Right lobe of liver (tissue), 6 donors: ENCODE measurements at regions of chr12 and their contacts with region 1.

Region 1: DNA sequence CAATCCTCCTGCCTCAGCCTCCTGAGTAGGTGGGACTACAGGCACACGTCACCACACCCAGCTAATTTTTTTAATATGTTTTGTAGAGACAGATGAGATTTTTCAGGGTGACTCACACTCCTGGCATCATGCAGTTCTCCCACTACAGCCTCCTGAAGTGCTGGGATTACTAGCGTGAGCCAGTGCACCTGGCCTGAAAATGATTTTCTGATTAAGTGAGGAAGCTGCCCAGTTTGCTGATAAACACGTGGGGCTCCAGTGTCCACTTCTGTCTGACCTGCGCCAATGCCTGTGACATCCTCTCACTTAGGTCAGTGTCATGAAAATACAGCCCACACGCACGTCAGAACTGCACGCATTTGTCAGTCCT is 37.0 kb upstream of the SFSWAP start:
- DNase-seq: no peak
- ATAC-seq: no peak
- H3K4me3 ChIP-seq: no peak overlapping the region
- H3K27ac ChIP-seq: no peak overlapping the region
- H3K4me1 ChIP-seq: no peaks in the 10 kb centered on the region
- H3K27me3 ChIP-seq: no peaks in the 10 kb centered on the region
- CTCF ChIP-seq: no peak
- POLR2A ChIP-seq: no peak

Region 2: GRCh38 chr12:131290255-131290959 is 383.5 kb before region 1 on chr12:
- intact Hi-C with region 1: loop called (anchors 10 kb)
- DNase-seq: no peak
- ATAC-seq: no peak
- H3K4me3 ChIP-seq: no peak overlapping the region
- H3K27ac ChIP-seq: no peak overlapping the region
- H3K4me1 ChIP-seq: no peaks in the 10 kb centered on the region
- H3K27me3 ChIP-seq: no peaks in the 10 kb centered on the region
- CTCF ChIP-seq: no peak
- POLR2A ChIP-seq: no peak

Region 3: GRCh38 chr12:131747276-131748177 is 73.7 kb after region 1 on chr12:
- intact Hi-C with region 1: no loop called
- DNase-seq: no peak
- ATAC-seq: peak in 1 of 4 donors; percentile 28
- H3K4me3 ChIP-seq: no peak overlapping the region
- H3K27ac ChIP-seq: no peak overlapping the region
- H3K4me1 ChIP-seq: no peaks in the 10 kb centered on the region
- H3K27me3 ChIP-seq: no peaks in the 10 kb centered on the region
- CTCF ChIP-seq: no peak
- POLR2A ChIP-seq: no peak

Region 4: DNA sequence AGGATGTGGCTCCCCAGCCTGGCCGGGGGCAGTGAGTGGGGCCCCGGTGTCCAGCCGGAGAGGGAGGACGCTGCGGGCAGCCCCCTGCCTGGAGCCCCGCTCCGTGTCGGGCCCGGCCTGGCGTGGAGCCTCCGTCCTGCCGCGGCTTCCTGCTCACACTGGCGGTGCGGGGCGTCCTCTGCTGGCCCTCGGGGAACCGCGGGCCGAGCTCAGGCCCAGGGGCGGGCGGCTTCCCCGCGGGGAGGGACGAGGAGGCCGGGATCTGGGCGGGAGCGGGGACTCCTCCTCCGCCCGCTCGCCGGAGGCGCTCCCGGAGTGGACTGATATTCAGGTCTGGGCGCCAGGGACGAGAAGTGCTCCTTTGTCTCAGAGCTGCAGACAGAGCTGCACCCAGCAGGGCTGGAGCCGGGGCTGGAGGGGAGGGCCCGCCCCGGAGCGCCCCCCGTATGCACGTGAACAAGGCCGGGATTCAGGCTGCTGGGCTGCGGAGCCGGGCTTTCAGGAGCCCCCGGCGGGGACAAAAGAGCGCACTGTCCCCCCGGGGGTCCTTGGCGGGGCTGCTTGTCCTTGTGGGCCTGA is 156.6 kb after region 1 on chr12:
- intact Hi-C with region 1: no loop called
- DNase-seq: peak in 2 of 3 donors; percentile 72 to 82
- ATAC-seq: peak; percentile 80 to 89 (median 86)
- H3K4me3 ChIP-seq: peak overlapping the region; percentile 27 to 37 (median 31)
- H3K27ac ChIP-seq: no peak overlapping the region
- H3K4me1 ChIP-seq: peaks cover 0 to 23% (median 0%) of the 10 kb centered on the region in 4 donors
- H3K27me3 ChIP-seq: peaks cover 0 to 16% of the 10 kb centered on the region in 2 donors
- CTCF ChIP-seq: peak; percentile 38 to 57 (median 46)
- POLR2A ChIP-seq: peak; percentile 67

Region 5: GRCh38 chr12:132460571-132460970 is 786.7 kb after region 1 on chr12:
- intact Hi-C with region 1: no loop called
- DNase-seq: peak in 1 of 3 donors; percentile 11
- ATAC-seq: peak in 1 of 4 donors; percentile 50
- H3K4me3 ChIP-seq: no peak overlapping the region
- H3K27ac ChIP-seq: no peak overlapping the region
- H3K4me1 ChIP-seq: no peaks in the 10 kb centered on the region
- H3K27me3 ChIP-seq: no peaks in the 10 kb centered on the region
- CTCF ChIP-seq: peak in 2 of 4 donors; percentile 30 to 38
- POLR2A ChIP-seq: no peak